ENCODE measurements at regions of chr17 and their contacts with region 1.

Region 1: DNA sequence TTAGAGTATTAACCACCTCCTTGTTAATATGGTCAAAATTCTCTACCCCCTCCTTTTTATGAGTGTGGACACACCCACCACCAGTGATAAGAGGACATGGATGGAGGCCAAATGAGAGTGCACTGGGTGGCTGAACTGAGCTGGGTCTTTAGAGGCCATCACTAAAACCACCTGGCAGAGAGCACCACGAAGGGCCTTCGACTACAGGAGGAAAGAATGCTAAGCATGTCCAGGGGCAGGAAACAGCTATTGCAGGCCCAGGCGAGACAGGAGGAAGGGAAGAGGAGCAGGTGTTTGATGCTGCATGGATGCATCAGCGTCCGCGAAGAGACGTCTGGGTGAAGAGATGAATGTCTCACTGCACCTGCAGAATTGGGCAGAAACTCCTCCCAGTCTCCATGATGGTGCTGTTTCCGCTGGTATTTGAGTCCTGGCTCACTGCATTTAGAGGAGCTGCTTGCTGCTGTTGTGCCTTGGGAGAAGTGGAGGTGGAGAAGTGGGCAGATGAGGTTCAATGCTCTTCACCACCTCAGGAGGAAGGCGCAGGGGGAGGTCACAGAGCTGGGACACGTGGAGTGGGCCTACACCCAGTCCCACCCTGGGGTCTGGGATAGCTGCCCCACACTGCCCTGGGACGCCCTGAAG is 33.2 kb downstream of the SPHK1 start:
- DNase-seq: no peak
- H3K4me3 ChIP-seq: no peak overlapping the region
- H3K27me3 ChIP-seq: no peaks in the 10 kb centered on the region
- CTCF ChIP-seq: no peak

Region 2: GRCh38 chr17:76458580-76459490 is 41.2 kb after region 1 on chr17:
- CTCF ChIA-PET with region 1: interaction called, 128 read pairs
- POLR2A ChIA-PET with region 1: no interaction called
- DNase-seq: no peak
- H3K4me3 ChIP-seq: no peak overlapping the region
- H3K27me3 ChIP-seq: peaks cover 5% of the 10 kb centered on the region; the same call in 1 of the 2 replicates
- CTCF ChIP-seq: peak; percentile 77